ENCODE measurements at regions of chr4 and their contacts with region 1.

Region 1: GRCh38 chr4:2963175-2963965 is at the starts of genes GRK4 and NOP14:
- DNase-seq: peak; percentile 98
- ATAC-seq: peak; percentile 93
- H3K4me3 ChIP-seq: peak within 1 kb of the TSS; percentile 48 to 86 (median 74)
- H3K4me3 Mint-ChIP-seq: peak within 1 kb of the TSS; percentile 96
- H3K27ac ChIP-seq: peak within 1 kb of the TSS; percentile 78 to 91
- H3K27ac Mint-ChIP-seq: peak within 1 kb of the TSS; percentile 96
- H3K4me1 ChIP-seq: peaks cover 20 to 25% of the 10 kb centered on the region in 2 donors
- H3K4me1 Mint-ChIP-seq: peaks cover 28% of the 10 kb centered on the region
- H3K27me3 ChIP-seq: no peaks in the 10 kb centered on the region
- H3K27me3 Mint-ChIP-seq: no peaks in the 10 kb centered on the region
- CTCF ChIP-seq: peak; percentile 48
- total RNA-seq, gene GRK4: 1.5 and 2.3 TPM in 2 replicates
- total RNA-seq, gene NOP14: 27.1 and 30.4 TPM in 2 replicates

Region 2: DNA sequence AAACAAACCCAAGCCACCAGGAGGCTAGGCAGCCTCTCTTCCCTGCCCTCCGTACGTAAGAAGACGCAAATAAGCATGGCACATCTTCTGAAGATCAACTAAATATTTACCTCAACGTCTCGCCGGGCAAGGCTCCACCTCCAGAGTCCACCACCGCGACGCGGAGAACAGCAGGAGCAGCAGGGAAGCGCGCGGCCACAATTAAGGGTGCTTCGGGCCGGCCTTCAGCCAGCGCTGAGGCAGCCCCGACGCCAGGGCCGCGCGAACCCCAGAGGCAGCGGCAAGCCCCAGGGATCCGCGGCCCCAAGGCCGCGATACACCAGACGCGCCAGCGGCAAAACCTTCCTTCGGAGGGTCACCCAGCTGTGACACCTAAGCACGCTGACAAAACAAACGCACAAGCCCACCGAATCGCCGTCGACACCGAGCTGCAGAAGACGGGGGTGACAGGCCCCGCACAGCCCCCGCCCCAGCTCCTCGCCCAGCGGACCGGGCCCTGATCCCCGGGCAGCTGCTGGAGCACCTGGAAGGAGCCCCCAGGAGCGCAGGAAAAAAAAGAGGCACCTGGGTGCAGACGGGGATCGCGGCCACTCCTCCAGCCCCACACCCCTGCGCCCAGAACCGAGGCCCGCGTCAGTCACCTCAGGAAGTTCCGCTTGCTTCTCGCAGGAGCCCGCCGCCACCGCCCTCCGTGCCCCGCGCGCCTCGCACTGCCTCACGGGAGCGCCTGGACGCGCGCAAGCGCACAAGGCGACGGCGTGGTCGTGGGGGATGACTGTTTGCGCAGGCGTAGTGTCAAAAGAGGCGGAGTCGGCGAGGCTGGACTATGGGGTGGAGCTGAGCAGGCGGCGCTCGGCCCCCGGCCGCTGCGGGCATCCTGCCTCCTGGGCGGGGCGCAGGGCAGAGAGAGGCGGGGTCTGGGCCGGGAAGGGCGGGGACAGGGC is 721.7 kb before region 1 on chr4 and contains the starts of genes HAUS3 and POLN:
- CTCF ChIA-PET with region 1: no interaction called
- POLR2A ChIA-PET with region 1: interaction called, 3 read pairs
- intact Hi-C with region 1: loop called (anchors 5 kb)
- DNase-seq: peak; percentile 100
- ATAC-seq: peak; percentile 97
- H3K4me3 ChIP-seq: peak within 1 kb of the TSS; percentile 66 to 88 (median 76)
- H3K4me3 Mint-ChIP-seq: peak within 1 kb of the TSS; percentile 95
- H3K27ac ChIP-seq: peak within 1 kb of the TSS; percentile 53 to 89
- H3K27ac Mint-ChIP-seq: peak within 1 kb of the TSS; percentile 95
- H3K4me1 ChIP-seq: peaks cover 34 to 45% of the 10 kb centered on the region in 2 donors
- H3K4me1 Mint-ChIP-seq: peaks cover 59% of the 10 kb centered on the region
- H3K27me3 ChIP-seq: no peaks in the 10 kb centered on the region
- H3K27me3 Mint-ChIP-seq: no peaks in the 10 kb centered on the region
- CTCF ChIP-seq: peak; percentile 23
- total RNA-seq, gene HAUS3: 24.2 and 26.5 TPM in 2 replicates
- total RNA-seq, gene POLN: 1.5 and 4.2 TPM in 2 replicates

Region 3: DNA sequence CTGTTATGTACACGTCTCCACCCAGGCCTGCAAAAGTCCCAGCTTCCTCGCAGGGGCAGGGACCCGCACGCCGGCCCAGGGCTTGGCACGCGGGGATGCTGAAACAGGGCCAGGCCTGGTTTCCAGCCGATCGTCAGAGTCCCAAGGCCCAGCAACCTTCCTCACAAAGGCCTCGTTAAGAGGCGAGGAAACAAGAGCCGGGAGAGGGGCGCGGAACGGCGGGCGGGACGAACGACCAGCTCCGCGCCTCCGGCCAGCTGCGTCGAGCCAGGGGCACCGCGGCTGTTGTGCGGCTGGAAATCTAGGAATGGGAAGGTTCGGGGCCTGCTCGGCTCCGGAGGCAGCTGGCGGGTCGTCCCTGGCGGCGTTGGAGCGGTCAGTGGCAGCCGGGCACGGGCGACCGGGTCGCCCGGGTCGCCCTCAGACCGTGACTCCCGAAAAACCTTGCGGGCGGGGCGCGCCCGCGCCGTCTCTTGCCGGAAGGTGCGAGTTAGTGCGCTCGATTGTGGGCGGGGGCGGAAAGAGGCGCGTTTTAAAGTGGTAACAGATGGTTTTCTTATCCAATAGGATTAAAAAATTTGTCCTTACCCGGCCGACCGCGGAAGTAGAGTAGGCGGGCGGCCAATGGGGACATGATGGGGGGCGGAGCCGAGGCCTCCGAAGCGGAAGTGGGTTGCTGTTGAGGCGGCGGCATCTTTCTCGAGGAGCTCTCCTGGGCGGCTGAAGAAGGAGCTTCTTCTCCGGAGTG is 494.8 kb before region 1 on chr4 and contains the start of gene RNF4:
- CTCF ChIA-PET with region 1: no interaction called
- POLR2A ChIA-PET with region 1: interaction called, 4 read pairs
- intact Hi-C with region 1: loop called (anchors 1 kb)
- DNase-seq: peak; percentile 96
- ATAC-seq: peak; percentile 85
- H3K4me3 ChIP-seq: peak within 1 kb of the TSS; percentile 77 to 99 (median 90)
- H3K4me3 Mint-ChIP-seq: peak within 1 kb of the TSS; percentile 99
- H3K27ac ChIP-seq: peak within 1 kb of the TSS; percentile 90 to 97
- H3K27ac Mint-ChIP-seq: peak within 1 kb of the TSS; percentile 99
- H3K4me1 ChIP-seq: peaks cover 31 to 33% of the 10 kb centered on the region in 2 donors
- H3K4me1 Mint-ChIP-seq: peaks cover 45% of the 10 kb centered on the region
- H3K27me3 ChIP-seq: no peaks in the 10 kb centered on the region
- H3K27me3 Mint-ChIP-seq: no peaks in the 10 kb centered on the region
- CTCF ChIP-seq: no peak
- total RNA-seq, gene RNF4: 95.2 and 104 TPM in 2 replicates

Region 4: DNA sequence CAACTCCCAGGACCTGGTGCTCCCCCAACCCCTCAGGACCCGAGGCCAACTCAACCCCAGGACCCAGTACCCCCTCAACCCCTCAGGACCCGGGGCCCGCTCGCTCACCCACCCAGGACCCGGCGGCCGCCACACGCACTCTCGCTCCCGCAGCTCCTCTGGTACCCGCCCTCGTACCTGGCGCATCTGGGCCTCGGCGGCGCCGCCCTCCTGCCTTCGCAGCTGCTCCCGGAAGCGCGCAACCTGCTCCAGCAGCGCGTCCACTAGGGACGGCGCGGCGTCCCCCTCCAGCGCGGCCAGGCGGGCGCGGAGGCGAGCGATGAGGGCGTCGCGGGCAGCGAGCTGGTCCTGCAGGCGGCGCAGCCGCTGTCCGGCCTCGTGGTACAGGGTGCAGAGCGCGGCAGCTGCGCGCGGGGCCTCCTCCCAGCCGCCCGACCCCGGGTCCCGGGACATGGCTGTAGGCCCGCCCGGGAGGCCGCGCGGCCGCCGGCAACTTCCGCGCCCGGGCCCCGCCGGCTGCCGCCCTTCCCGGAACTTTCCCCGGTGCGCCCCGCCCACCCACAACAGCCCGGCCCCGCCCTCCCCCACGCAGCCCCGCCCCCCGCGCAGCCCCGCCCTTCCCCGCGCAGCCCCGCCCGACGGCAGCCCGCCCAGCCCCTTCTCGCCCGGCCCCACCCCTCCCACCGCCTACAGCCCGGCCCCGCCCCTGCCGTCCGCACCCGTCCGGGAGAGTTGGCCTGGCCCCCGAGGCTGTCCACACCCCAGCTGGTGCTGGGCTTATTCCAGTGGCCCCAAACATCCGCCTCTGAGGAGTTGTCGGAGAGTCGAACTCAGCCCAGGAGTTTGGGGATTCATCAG is 207.3 kb before region 1 on chr4 and contains the start of gene TNIP2:
- CTCF ChIA-PET with region 1: interaction called, 5 read pairs
- POLR2A ChIA-PET with region 1: interaction called, 5 read pairs
- intact Hi-C with region 1: loop called (anchors 1 kb)
- DNase-seq: peak; percentile 88
- ATAC-seq: peak; percentile 86
- H3K4me3 ChIP-seq: peak within 1 kb of the TSS in 4 of 5 experiments; percentile 61 to 78 (median 68)
- H3K4me3 Mint-ChIP-seq: peak within 1 kb of the TSS; percentile 83
- H3K27ac ChIP-seq: peak within 1 kb of the TSS; percentile 38 to 83
- H3K27ac Mint-ChIP-seq: peak within 1 kb of the TSS; percentile 79
- H3K4me1 ChIP-seq: peaks cover 11 to 21% of the 10 kb centered on the region in 2 donors
- H3K4me1 Mint-ChIP-seq: peaks cover 31% of the 10 kb centered on the region
- H3K27me3 ChIP-seq: no peaks in the 10 kb centered on the region
- H3K27me3 Mint-ChIP-seq: no peaks in the 10 kb centered on the region
- CTCF ChIP-seq: peak; percentile 31
- total RNA-seq, gene TNIP2: 47.6 and 51.0 TPM in 2 replicates

Region 5: GRCh38 chr4:2902126-2902525 is 61.2 kb before region 1 on chr4:
- CTCF ChIA-PET with region 1: no interaction called
- POLR2A ChIA-PET with region 1: no interaction called
- intact Hi-C with region 1: no loop called
- DNase-seq: no peak
- ATAC-seq: no peak
- H3K4me3 ChIP-seq: no peak overlapping the region
- H3K4me3 Mint-ChIP-seq: no peak overlapping the region
- H3K27ac ChIP-seq: no peak overlapping the region
- H3K27ac Mint-ChIP-seq: no peak overlapping the region
- H3K4me1 ChIP-seq: no peaks in the 10 kb centered on the region
- H3K4me1 Mint-ChIP-seq: no peaks in the 10 kb centered on the region
- H3K27me3 ChIP-seq: no peaks in the 10 kb centered on the region
- H3K27me3 Mint-ChIP-seq: no peaks in the 10 kb centered on the region
- CTCF ChIP-seq: no peak

Region 6: GRCh38 chr4:2934813-2935761 is 28.3 kb before region 1 on chr4:
- CTCF ChIA-PET with region 1: interaction called, 6 read pairs
- POLR2A ChIA-PET with region 1: interaction called, 4 read pairs
- intact Hi-C with region 1: loop called (anchors 1 kb)
- DNase-seq: peak; percentile 97
- ATAC-seq: peak; percentile 54
- H3K4me3 ChIP-seq: peak overlapping the region; percentile 8 to 96 (median 80)
- H3K4me3 Mint-ChIP-seq: peak overlapping the region; percentile 89
- H3K27ac ChIP-seq: peak overlapping the region; percentile 55 to 87
- H3K27ac Mint-ChIP-seq: peak overlapping the region; percentile 87
- H3K4me1 ChIP-seq: peaks cover 39 to 63% of the 10 kb centered on the region in 2 donors
- H3K4me1 Mint-ChIP-seq: peaks cover 55% of the 10 kb centered on the region
- H3K27me3 ChIP-seq: no peaks in the 10 kb centered on the region
- H3K27me3 Mint-ChIP-seq: no peaks in the 10 kb centered on the region
- CTCF ChIP-seq: no peak

Region 7: GRCh38 chr4:2977211-2978088 is 14.1 kb after region 1 on chr4:
- CTCF ChIA-PET with region 1: interaction called, 30 read pairs
- POLR2A ChIA-PET with region 1: no interaction called
- intact Hi-C with region 1: no loop called
- DNase-seq: no peak
- ATAC-seq: no peak
- H3K4me3 ChIP-seq: no peak overlapping the region
- H3K4me3 Mint-ChIP-seq: no peak overlapping the region
- H3K27ac ChIP-seq: no peak overlapping the region
- H3K27ac Mint-ChIP-seq: no peak overlapping the region
- H3K4me1 ChIP-seq: peaks cover 0 to 2% of the 10 kb centered on the region in 2 donors
- H3K4me1 Mint-ChIP-seq: peaks cover 1% of the 10 kb centered on the region
- H3K27me3 ChIP-seq: peaks cover 0 to 2% (median 0%) of the 10 kb centered on the region in 4 experiments
- H3K27me3 Mint-ChIP-seq: no peaks in the 10 kb centered on the region
- CTCF ChIP-seq: no peak

Region 8: GRCh38 chr4:3074078-3074795 is 110.9 kb after region 1 on chr4 and contains the starts of genes HTT and HTT-AS:
- CTCF ChIA-PET with region 1: no interaction called
- POLR2A ChIA-PET with region 1: no interaction called
- intact Hi-C with region 1: loop called (anchors 1 kb)
- DNase-seq: peak; percentile 99
- ATAC-seq: peak; percentile 77
- H3K4me3 ChIP-seq: peak within 1 kb of the TSS; percentile 59 to 96 (median 76)
- H3K4me3 Mint-ChIP-seq: peak within 1 kb of the TSS; percentile 95
- H3K27ac ChIP-seq: peak within 1 kb of the TSS; percentile 72 to 83
- H3K27ac Mint-ChIP-seq: peak within 1 kb of the TSS; percentile 96
- H3K4me1 ChIP-seq: peaks cover 38 to 51% of the 10 kb centered on the region in 2 donors
- H3K4me1 Mint-ChIP-seq: peaks cover 33% of the 10 kb centered on the region
- H3K27me3 ChIP-seq: no peaks in the 10 kb centered on the region
- H3K27me3 Mint-ChIP-seq: no peaks in the 10 kb centered on the region
- CTCF ChIP-seq: no peak
- total RNA-seq, gene HTT: 182 and 195 TPM in 2 replicates
- total RNA-seq, gene HTT-AS: 0.84 TPM in 1 of 2 replicates, not detected in the other

Measured in B cell (primary cell).